ENCODE measurements at regions of chr12 and their contacts with region 1.

Region 1: DNA sequence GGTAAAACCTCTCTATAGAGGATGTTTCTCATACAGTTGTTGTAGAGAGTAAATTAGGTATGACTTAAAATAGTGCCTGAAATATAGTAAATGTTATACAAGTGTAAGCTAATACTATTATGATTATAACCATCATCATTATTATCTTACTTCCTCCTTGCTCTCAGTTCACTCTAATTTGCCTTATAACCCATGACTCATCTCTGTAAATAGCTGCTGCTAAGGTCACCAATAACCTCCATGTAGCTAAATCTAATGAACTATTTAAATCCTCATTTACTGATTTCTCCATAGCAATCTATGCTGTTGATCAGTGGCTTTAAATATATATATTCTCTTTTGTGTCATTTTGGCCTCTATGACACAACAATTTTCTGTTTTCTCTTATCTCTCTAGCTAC is 109.6 kb downstream of the RMST start:
- DNase-seq: no peak
- H3K4me3 ChIP-seq: no peak overlapping the region
- H3K27ac ChIP-seq: no peak overlapping the region
- H3K4me1 ChIP-seq: peaks cover 38% of the 10 kb centered on the region
- H3K27me3 ChIP-seq: no peaks in the 10 kb centered on the region
- CTCF ChIP-seq: no peak

Region 2: GRCh38 chr12:97435153-97435552 is 137.1 kb before region 1 on chr12:
- CTCF ChIA-PET with region 1: no interaction called
- dilution Hi-C with region 1: no loop called
- in situ Hi-C with region 1: no loop called
- intact Hi-C with region 1: no loop called
- DNase-seq: no peak
- H3K4me3 ChIP-seq: no peak overlapping the region
- H3K27ac ChIP-seq: no peak overlapping the region
- H3K4me1 ChIP-seq: no peaks in the 10 kb centered on the region
- H3K27me3 ChIP-seq: no peaks in the 10 kb centered on the region
- CTCF ChIP-seq: no peak

Region 3: GRCh38 chr12:97943364-97943763 is 371.1 kb after region 1 on chr12:
- CTCF ChIA-PET with region 1: no interaction called
- dilution Hi-C with region 1: no loop called
- in situ Hi-C with region 1: no loop called
- intact Hi-C with region 1: loop called (anchors 5 kb)
- DNase-seq: peak; percentile 27
- H3K4me3 ChIP-seq: no peak overlapping the region
- H3K27ac ChIP-seq: no peak overlapping the region
- H3K4me1 ChIP-seq: peaks cover 40% of the 10 kb centered on the region
- H3K27me3 ChIP-seq: no peaks in the 10 kb centered on the region
- CTCF ChIP-seq: peak; percentile 23 to 39

Measured in mammary epithelial cell (primary cell).